ENCODE measurements at regions of chr5 and their contacts with region 1.

Region 1: DNA sequence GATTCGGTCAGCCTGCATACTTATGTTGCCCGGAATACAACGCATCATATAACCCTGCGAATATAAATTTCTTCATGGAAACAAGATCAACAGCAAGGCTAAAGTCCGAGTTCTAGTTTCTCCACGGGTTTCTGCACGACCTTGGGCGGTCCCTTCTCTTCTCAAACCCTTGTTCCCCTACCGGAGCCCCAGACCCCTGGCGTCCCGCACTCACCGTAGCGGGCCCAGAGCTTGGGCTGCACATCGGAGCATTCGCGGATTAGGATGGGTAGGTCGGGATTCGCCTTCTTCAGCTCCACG is 438 bp downstream of the NDUFA2 start:
- DNase-seq: no peak
- H3K4me3 ChIP-seq: peak overlapping the region; percentile 88 to 89
- H3K27ac ChIP-seq: peak overlapping the region; percentile 72 to 77; a peak in 3 of 4 replicates
- H3K4me1 ChIP-seq: peaks cover 5 to 8% of the 10 kb centered on the region in 2 experiments; a peak in 2 of 4 replicates
- H3K27me3 ChIP-seq: no peaks in the 10 kb centered on the region
- CTCF ChIP-seq: no peak
- EP300 ChIP-seq: no peak
- RAD21 ChIP-seq: no peak

Region 2: GRCh38 chr5:140342287-140342686 is 304.7 kb before region 1 on chr5:
- CTCF ChIA-PET with region 1: no interaction called
- POLR2A ChIA-PET with region 1: no interaction called
- DNase-seq: no peak
- H3K4me3 ChIP-seq: no peak overlapping the region
- H3K27ac ChIP-seq: peak overlapping the region in 1 of 2 experiments; percentile 18; a peak in 1 of 4 replicates
- H3K4me1 ChIP-seq: peaks cover 11 to 35% of the 10 kb centered on the region in 2 experiments
- H3K27me3 ChIP-seq: no peaks in the 10 kb centered on the region
- CTCF ChIP-seq: no peak
- EP300 ChIP-seq: no peak
- RAD21 ChIP-seq: no peak

Region 3: GRCh38 chr5:140497897-140498296 is 149.1 kb before region 1 on chr5:
- CTCF ChIA-PET with region 1: no interaction called
- POLR2A ChIA-PET with region 1: no interaction called
- DNase-seq: no peak
- H3K4me3 ChIP-seq: no peak overlapping the region
- H3K27ac ChIP-seq: no peak overlapping the region
- H3K4me1 ChIP-seq: no peaks in the 10 kb centered on the region
- H3K27me3 ChIP-seq: no peaks in the 10 kb centered on the region
- CTCF ChIP-seq: no peak
- EP300 ChIP-seq: no peak
- RAD21 ChIP-seq: no peak

Region 4: GRCh38 chr5:140664359-140665119 is 17.5 kb after region 1 on chr5 and contains the start of gene WDR55:
- CTCF ChIA-PET with region 1: interaction called, 11 read pairs
- POLR2A ChIA-PET with region 1: interaction called, 14 read pairs
- DNase-seq: peak; percentile 96
- H3K4me3 ChIP-seq: peak within 1 kb of the TSS; percentile 78 to 88
- H3K27ac ChIP-seq: peak within 1 kb of the TSS; percentile 89 to 94
- H3K4me1 ChIP-seq: peaks cover 0 to 4% of the 10 kb centered on the region in 2 experiments; a peak in 2 of 4 replicates
- H3K27me3 ChIP-seq: no peaks in the 10 kb centered on the region
- CTCF ChIP-seq: no peak
- EP300 ChIP-seq: no peak
- RAD21 ChIP-seq: no peak
- polyA plus RNA-seq, gene WDR55: 28.3 and 32.7 TPM in 2 replicates

Region 5: GRCh38 chr5:140690941-140691924 is 44.2 kb after region 1 on chr5 and contains the starts of genes HARS1 and HARS2:
- CTCF ChIA-PET with region 1: interaction called, 5 read pairs
- POLR2A ChIA-PET with region 1: interaction called, 17 read pairs
- DNase-seq: peak; percentile 92
- H3K4me3 ChIP-seq: peak within 1 kb of the TSS; percentile 87
- H3K27ac ChIP-seq: peak within 1 kb of the TSS; percentile 86 to 88
- H3K4me1 ChIP-seq: peaks cover 0 to 12% of the 10 kb centered on the region in 2 experiments; a peak in 3 of 4 replicates
- H3K27me3 ChIP-seq: no peaks in the 10 kb centered on the region
- CTCF ChIP-seq: no peak
- EP300 ChIP-seq: peak in 1 of 2 experiments; percentile 22; a peak in 1 of 4 replicates
- RAD21 ChIP-seq: no peak
- polyA plus RNA-seq, gene HARS1: 124 and 135 TPM in 2 replicates
- polyA plus RNA-seq, gene HARS2: 40.8 and 54.5 TPM in 2 replicates

Region 6: DNA sequence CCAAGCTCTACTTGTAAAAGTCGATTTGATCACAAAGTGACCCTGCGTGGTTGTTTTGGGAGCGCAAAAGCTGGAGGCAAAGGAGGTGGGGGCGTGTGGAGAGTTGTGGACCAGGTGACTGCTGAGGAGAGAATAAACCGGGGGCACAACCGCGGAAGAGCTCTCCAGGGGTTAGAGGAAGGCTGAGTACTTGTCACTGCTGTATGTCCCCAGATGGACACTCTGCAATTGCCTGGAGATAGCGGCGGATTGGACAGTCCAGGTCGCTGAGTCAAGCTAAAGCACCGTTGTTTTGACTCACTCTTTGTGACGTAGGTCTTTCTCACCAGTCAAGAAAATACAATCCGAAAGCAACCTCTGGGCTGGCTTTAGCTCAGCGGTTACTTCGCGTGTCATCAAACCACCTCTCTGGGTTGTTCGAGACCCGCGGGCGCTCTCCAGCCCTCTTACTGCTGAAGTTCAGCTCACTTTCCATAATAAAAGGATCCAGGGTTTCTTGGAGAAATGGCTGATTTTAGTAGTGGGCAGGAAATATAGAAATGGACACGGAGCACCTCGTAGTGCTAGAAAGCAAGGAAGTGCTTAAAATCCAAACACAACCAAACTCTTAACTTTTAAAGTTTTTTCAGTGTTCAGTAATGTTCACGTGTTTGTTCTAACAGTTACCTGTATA is 78.9 kb after region 1 on chr5:
- CTCF ChIA-PET with region 1: interaction called, 11 read pairs
- POLR2A ChIA-PET with region 1: interaction called, 6 read pairs
- DNase-seq: peak; percentile 62
- H3K4me3 ChIP-seq: peak overlapping the region; percentile 52 to 56
- H3K27ac ChIP-seq: peak overlapping the region in 1 of 2 experiments; percentile 26; a peak in 1 of 4 replicates
- H3K4me1 ChIP-seq: no peaks in the 10 kb centered on the region; a peak in 1 of 4 replicates
- H3K27me3 ChIP-seq: no peaks in the 10 kb centered on the region
- CTCF ChIP-seq: no peak
- EP300 ChIP-seq: no peak
- RAD21 ChIP-seq: no peak

Measured in SK-N-SH (cell line).